ENCODE measurements at regions of chr2 and their contacts with region 1.

Region 1: DNA sequence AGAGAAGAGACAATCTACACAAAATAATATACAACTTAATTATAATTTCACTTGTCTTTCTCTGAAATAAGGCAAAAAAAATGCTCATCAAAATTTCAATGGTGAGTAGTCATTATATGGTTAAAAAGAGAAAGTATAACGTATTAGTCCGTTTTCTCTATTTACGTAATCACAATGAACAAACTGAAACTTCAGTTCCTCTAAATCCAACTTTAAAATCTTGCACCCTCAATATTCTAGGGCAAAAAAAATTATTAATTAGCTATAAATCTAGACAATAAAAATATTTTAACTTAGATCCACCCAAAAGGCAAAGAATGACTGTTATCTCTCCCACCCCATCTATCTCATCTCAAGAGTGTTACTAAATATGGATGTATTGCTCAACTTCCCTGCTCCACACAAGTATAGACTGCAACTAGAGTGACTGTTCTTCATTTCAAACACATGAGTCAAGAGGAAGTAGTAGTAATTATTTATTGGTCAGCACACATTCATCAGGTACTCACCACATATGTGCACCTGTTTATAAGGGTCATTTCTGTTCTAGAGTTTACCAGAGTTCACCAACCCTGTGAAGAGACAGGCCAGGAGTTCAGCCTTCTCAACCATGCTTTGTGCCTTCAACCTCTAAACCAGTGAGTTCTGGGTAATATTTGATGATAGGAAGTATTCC is 36.4 kb downstream of the STK39 start:
- DNase-seq: no peak
- H3K4me3 Mint-ChIP-seq: peak overlapping the region; percentile 28
- H3K27ac Mint-ChIP-seq: peak overlapping the region; percentile 85
- H3K4me1 Mint-ChIP-seq: peaks cover 53% of the 10 kb centered on the region
- H3K27me3 Mint-ChIP-seq: no peaks in the 10 kb centered on the region

Region 2: GRCh38 chr2:167579826-167580225 is 631.2 kb before region 1 on chr2:
- intact Hi-C with region 1: no loop called
- DNase-seq: no peak
- H3K4me3 Mint-ChIP-seq: no peak overlapping the region
- H3K27ac Mint-ChIP-seq: no peak overlapping the region
- H3K4me1 Mint-ChIP-seq: no peaks in the 10 kb centered on the region
- H3K27me3 Mint-ChIP-seq: no peaks in the 10 kb centered on the region

Region 3: GRCh38 chr2:168166902-168167510 is 44.0 kb before region 1 on chr2:
- intact Hi-C with region 1: loop called (anchors 1 kb)
- DNase-seq: no peak
- H3K4me3 Mint-ChIP-seq: peak overlapping the region; percentile 58
- H3K27ac Mint-ChIP-seq: peak overlapping the region; percentile 64
- H3K4me1 Mint-ChIP-seq: peaks cover 30% of the 10 kb centered on the region
- H3K27me3 Mint-ChIP-seq: no peaks in the 10 kb centered on the region

Region 4: DNA sequence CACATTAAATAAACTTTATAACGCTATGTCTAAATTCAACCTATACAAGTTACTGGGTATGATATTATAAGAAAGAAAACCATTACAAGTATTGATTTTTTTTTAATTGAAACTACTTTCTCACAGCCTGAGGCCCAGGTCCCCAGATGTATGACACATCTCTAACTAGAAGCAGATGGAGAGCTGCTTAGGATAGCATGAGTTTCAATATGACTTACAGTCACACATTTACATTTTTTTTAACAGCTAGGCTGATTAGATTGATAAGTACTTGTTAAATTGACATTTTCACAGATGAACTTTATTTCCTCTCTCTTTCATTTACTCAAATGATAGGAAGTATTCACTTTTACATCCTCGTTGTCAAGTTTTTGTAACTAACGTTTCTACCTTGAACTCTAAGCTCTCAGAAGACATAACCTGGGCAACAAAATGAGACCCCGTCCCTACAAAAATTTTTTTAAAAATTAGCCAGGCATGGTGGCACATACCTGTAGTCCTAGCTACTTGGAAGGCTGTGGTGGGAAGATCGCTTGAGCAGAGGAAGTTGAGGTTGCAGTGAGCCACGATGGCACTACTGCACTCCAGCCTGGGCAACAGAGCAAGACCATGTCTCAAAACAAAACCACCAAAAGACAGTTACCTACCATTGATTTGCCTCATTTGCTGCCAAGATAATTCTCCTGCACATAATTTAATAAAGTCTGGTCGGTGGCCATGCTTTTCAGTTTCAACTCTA is 16.1 kb before region 1 on chr2:
- intact Hi-C with region 1: loop called (anchors 1 kb)
- DNase-seq: peak; percentile 27
- H3K4me3 Mint-ChIP-seq: peak overlapping the region; percentile 64
- H3K27ac Mint-ChIP-seq: peak overlapping the region; percentile 91
- H3K4me1 Mint-ChIP-seq: peaks cover 56% of the 10 kb centered on the region
- H3K27me3 Mint-ChIP-seq: no peaks in the 10 kb centered on the region

Region 5: GRCh38 chr2:168220965-168221819 is 10.2 kb after region 1 on chr2:
- intact Hi-C with region 1: loop called (anchors 1 kb)
- DNase-seq: no peak
- H3K4me3 Mint-ChIP-seq: no peak overlapping the region
- H3K27ac Mint-ChIP-seq: no peak overlapping the region
- H3K4me1 Mint-ChIP-seq: peaks cover 24% of the 10 kb centered on the region
- H3K27me3 Mint-ChIP-seq: no peaks in the 10 kb centered on the region

Region 6: DNA sequence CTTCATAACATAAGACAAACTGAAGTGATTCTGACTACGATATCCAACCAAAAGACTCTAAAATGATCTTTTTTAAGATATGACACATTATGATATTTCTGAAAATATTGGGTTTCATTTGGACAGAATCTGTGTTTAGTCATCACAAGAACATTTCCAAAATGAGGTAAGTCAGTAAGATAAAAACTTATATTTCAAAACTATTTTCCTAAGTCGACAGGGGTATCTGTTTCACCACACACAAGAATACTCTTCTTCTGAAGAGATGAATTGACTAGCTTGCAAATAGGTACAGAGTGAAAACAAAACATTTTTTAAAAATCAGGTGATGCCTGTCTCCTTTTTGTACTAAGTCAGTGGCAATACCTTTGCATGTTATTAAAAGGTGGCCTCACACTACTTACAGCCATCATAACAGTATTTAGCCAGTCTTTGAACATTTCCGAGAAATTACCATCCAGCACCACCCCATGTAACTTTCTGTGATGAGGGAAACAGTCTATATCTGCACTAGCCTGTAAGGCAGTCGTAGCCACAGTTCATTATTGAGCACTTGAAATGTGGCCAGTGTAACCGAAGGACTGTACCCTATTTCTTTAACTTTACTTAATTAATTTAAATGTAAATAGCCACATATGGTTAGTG is 22.9 kb after region 1 on chr2:
- intact Hi-C with region 1: loop called (anchors 1 kb)
- DNase-seq: no peak
- H3K4me3 Mint-ChIP-seq: no peak overlapping the region
- H3K27ac Mint-ChIP-seq: peak overlapping the region; percentile 32
- H3K4me1 Mint-ChIP-seq: peaks cover 33% of the 10 kb centered on the region
- H3K27me3 Mint-ChIP-seq: no peaks in the 10 kb centered on the region

Region 7: GRCh38 chr2:168455648-168456520 is 244.9 kb after region 1 on chr2 and contains the start of gene CERS6:
- intact Hi-C with region 1: loop called (anchors 1 kb)
- DNase-seq: peak; percentile 85
- H3K4me3 Mint-ChIP-seq: peak within 1 kb of the TSS; percentile 93
- H3K27ac Mint-ChIP-seq: peak within 1 kb of the TSS; percentile 80
- H3K4me1 Mint-ChIP-seq: peaks cover 37% of the 10 kb centered on the region
- H3K27me3 Mint-ChIP-seq: peaks cover 3% of the 10 kb centered on the region
- total RNA-seq, gene CERS6: 27.0 and 27.1 TPM in 2 replicates

Region 8: DNA sequence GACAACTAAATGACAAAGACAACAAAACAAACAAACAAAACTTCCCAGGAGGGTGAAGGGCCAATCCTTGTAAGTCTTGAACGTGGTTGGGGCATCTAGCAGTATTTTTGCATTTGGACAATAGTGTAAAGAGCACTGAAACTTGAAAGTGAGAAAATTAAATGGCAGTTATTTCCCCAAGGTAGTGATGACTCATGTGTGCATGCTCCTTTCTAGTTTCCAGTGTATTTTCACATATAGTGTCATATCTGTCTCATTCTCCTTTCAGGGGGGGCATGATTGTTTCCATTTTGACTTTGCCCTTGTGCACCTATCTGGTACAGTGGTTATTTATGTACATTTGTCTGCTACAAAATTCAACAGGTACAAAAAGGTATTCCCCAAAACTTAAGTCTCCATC is 284.5 kb after region 1 on chr2:
- intact Hi-C with region 1: loop called (anchors 1 kb)
- DNase-seq: no peak
- H3K4me3 Mint-ChIP-seq: no peak overlapping the region
- H3K27ac Mint-ChIP-seq: peak overlapping the region; percentile 65
- H3K4me1 Mint-ChIP-seq: peaks cover 62% of the 10 kb centered on the region
- H3K27me3 Mint-ChIP-seq: peaks cover 3% of the 10 kb centered on the region

Measured in activated T-helper 1 cell treated with anti-CD3 and anti-CD28 coated beads, Interleukin-12 subunit alpha, Interleukin-12 subunit beta, Interleukin-2, Interleukin-4 antibody, amounts not matched to agents 30 ng/mL and 10 ng/mL and 1 ng/mL, durations not matched to agents 14 hours and 24 hours and 36 hours (primary cell).